K562 (cell line): ENCODE measurements at regions of chr1 and their contacts with region 1.

Region 1: DNA sequence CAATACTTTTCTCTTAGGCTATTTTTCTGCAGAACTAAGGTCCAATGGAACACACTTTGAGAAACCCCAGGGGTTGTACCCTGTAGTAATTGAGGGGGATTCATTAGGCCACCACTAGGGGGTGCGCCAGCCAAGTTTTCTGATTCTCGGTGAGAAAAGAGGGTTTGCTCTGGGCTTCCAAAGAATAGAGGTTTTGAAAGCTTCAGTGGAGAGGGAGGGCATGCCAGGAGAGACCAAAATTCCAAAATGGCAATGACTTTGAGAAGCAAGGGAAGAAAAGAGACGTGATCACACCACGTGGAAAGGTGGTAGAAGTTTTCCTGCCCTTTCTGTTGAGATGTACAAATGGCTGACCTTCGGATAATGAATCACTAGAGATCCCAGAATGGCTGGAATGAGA is 323.3 kb downstream of the RPS6KC1 start:
- DNase-seq: peak; percentile 77 to 83 (median 82)
- ATAC-seq: peak; percentile 95
- H3K4me3 ChIP-seq: no peak overlapping the region
- H3K27ac ChIP-seq: no peak overlapping the region
- H3K4me1 ChIP-seq: no peaks in the 10 kb centered on the region
- H3K27me3 ChIP-seq: peaks cover 3 to 8% of the 10 kb centered on the region in 2 experiments; a peak in 4 of 5 replicates
- CTCF ChIP-seq: peak; percentile 79 to 94 (median 89)
- EP300 ChIP-seq: no peak
- POLR2A ChIP-seq: no peak
- RAD21 ChIP-seq: peak; percentile 73 to 86

Region 2: GRCh38 chr1:213122514-213122929 is 251.8 kb before region 1 on chr1:
- CTCF ChIA-PET with region 1: no interaction called
- POLR2A ChIA-PET with region 1: no interaction called
- in situ Hi-C with region 1: no loop called
- intact Hi-C with region 1: loop called (anchors 5 kb)
- DNase-seq: peak; percentile 19 to 77 (median 26)
- ATAC-seq: 0 out of 3 replicates have a peak, but pooled peaks have one; percentile 21
- H3K4me3 ChIP-seq: no peak overlapping the region
- H3K27ac ChIP-seq: peak overlapping the region; percentile 10; the same call in 2 of the 3 replicates
- H3K4me1 ChIP-seq: peaks cover 0 to 31% of the 10 kb centered on the region in 2 experiments
- H3K27me3 ChIP-seq: no peaks in the 10 kb centered on the region
- CTCF ChIP-seq: peak in 2 of 3 experiments; percentile 29 to 70; a peak in 4 of 6 replicates
- EP300 ChIP-seq: no peak
- POLR2A ChIP-seq: no peak
- RAD21 ChIP-seq: peak; percentile 45 to 66

Region 3: DNA sequence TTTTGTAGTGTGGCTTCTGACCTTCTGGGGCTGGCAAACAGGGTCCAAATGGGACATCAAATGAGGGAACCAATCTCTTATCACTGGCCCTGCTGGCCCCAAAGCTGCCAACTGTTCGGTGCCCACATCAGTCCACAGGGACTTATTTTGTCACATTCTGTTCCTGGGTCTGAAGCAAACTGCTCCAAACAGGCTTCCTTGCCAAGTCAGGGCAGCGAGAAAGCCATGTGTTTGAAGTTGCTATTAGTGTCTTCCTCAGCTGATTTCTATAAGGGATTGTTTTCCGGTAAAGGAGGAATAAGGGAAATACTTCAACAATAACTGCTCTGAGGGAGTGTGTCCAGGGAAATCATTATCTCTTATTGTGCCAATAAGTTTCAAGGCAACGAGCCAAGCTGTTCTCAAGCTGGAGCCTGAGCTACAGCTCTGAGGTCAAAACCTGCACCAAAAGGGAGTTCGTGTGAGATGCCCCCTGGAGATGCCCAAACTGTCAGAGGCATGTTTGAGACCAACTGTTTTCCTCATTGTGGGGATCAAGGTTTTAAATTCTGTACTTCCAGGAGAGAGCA is 232.0 kb after region 1 on chr1:
- CTCF ChIA-PET with region 1: no interaction called
- POLR2A ChIA-PET with region 1: no interaction called
- in situ Hi-C with region 1: no loop called
- intact Hi-C with region 1: loop called (anchors 10 kb)
- DNase-seq: no peak
- ATAC-seq: no peak
- H3K4me3 ChIP-seq: no peak overlapping the region
- H3K27ac ChIP-seq: no peak overlapping the region
- H3K4me1 ChIP-seq: peaks cover 5 to 12% of the 10 kb centered on the region in 2 experiments; a peak in 3 of 5 replicates
- H3K27me3 ChIP-seq: peaks cover 2 to 9% of the 10 kb centered on the region in 2 experiments; a peak in 3 of 5 replicates
- CTCF ChIP-seq: no peak
- EP300 ChIP-seq: no peak
- POLR2A ChIP-seq: no peak
- RAD21 ChIP-seq: no peak

Region 4: DNA sequence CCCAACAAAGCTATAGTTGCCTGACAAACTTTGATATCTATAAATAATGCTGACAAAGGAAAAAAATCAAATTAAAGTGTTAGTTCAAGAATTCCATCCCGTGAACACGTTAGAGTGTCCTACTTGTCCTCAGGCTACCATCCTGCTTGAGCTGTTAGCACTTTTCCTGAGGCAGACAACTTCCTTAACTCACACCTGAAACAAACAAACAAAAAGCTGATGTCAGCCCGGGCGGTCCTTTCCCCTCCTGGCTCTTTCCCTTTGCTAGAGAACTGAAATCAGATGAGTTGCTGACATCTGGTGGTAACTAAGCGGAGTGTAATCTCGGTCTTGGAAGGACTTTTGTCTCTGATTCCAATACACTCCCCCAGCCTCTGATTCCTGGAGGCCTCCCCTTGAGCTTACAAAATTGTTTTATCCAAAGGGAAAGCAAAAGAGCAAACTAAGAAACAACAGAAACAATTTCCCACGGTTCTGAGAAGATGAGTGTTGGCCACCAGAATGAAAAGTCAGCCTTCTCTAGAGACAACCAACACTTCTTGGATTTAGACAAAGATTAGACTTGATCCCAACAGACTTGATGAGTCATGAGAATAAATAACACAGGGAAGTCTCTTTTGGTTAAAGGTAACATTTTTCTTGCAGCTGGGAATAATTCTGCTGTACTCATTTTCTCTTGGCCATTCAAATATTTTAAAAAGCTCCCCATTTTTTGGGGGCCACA is 748.9 kb after region 1 on chr1:
- CTCF ChIA-PET with region 1: interaction called, 4 read pairs
- POLR2A ChIA-PET with region 1: no interaction called
- in situ Hi-C with region 1: no loop called
- intact Hi-C with region 1: loop called (anchors 1 kb)
- DNase-seq: peak; percentile 24 to 61 (median 45)
- ATAC-seq: peak; percentile 97
- H3K4me3 ChIP-seq: no peak overlapping the region
- H3K27ac ChIP-seq: no peak overlapping the region
- H3K4me1 ChIP-seq: no peaks in the 10 kb centered on the region; a peak in 1 of 5 replicates
- H3K27me3 ChIP-seq: peaks cover 0 to 5% of the 10 kb centered on the region in 2 experiments; a peak in 3 of 5 replicates
- CTCF ChIP-seq: peak; percentile 51 to 69 (median 56)
- EP300 ChIP-seq: no peak
- POLR2A ChIP-seq: no peak
- RAD21 ChIP-seq: peak; percentile 92 to 93